BJ (cell line): ENCODE measurements at regions of chr6 and their contacts with region 1.

Region 1: GRCh38 chr6:109187399-109188114 is 92.2 kb downstream of the CEP57L1 start:
- DNase-seq: no peak
- H3K4me3 ChIP-seq: no peak overlapping the region
- H3K27me3 ChIP-seq: peaks cover 12% of the 10 kb centered on the region
- CTCF ChIP-seq: peak; percentile 95

Region 2: GRCh38 chr6:109349419-109350078 is 162.0 kb after region 1 on chr6:
- CTCF ChIA-PET with region 1: interaction called, 10 read pairs
- POLR2A ChIA-PET with region 1: no interaction called
- DNase-seq: peak; percentile 10
- H3K4me3 ChIP-seq: no peak overlapping the region
- H3K27me3 ChIP-seq: no peaks in the 10 kb centered on the region
- CTCF ChIP-seq: no peak

Region 3: DNA sequence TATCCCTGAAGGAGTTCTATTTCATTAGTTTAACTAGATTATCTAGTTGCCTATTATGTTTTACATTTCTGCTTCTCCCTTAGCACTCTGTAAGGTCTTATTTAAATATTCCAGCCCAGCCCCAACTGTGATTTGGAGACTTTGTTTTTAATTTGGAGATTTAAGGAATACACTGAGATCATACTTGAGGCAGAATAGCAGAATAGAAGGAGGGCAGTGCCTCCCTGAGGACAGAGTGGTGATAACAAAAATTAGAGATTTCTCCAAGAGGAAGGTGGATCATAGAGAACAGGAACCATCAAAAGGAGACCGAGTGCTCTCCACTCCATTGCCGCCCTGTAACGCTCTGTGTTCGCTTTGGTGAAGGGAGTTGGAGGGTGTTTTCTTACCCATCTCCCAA is 209.5 kb after region 1 on chr6:
- CTCF ChIA-PET with region 1: interaction called, 23 read pairs
- POLR2A ChIA-PET with region 1: no interaction called
- DNase-seq: no peak
- H3K4me3 ChIP-seq: no peak overlapping the region
- H3K27me3 ChIP-seq: 0 out of 2 replicates have a peak, but pooled peaks cover 1% of the 10 kb centered on the region
- CTCF ChIP-seq: peak; percentile 44